ENCODE measurements at regions of chr4 and their contacts with region 1.

Region 1: GRCh38 chr4:42965326-42965725 is 72.8 kb downstream of the GRXCR1 start:
- DNase-seq: peak; percentile 48
- ATAC-seq: peak; percentile 60
- H3K4me3 ChIP-seq: no peak overlapping the region
- H3K27ac ChIP-seq: no peak overlapping the region
- H3K4me1 ChIP-seq: no peaks in the 10 kb centered on the region
- H3K27me3 ChIP-seq: no peaks in the 10 kb centered on the region
- CTCF ChIP-seq: peak; percentile 65

Region 2: DNA sequence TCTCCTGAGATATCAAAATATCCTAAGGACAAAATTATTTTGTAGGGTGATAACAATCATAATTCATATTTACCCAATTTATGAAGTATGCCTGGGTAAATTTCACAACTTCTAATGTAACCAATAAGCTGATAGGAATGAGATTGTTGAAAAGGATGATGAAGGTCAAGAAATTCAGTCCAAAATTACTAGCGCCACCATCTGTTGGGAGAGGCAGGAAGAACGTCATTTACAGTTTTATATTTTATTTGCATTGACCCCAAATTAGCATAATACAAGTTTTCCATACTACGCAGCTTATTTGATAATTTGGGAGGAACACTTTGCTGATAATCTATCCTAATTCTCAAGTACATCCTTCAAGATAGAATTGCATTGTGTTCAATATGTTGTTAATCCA is 387.1 kb before region 1 on chr4:
- CTCF ChIA-PET with region 1: no interaction called
- POLR2A ChIA-PET with region 1: no interaction called
- intact Hi-C with region 1: no loop called
- DNase-seq: no peak
- ATAC-seq: no peak
- H3K4me3 ChIP-seq: no peak overlapping the region
- H3K27ac ChIP-seq: no peak overlapping the region
- H3K4me1 ChIP-seq: peaks cover 12% of the 10 kb centered on the region
- H3K27me3 ChIP-seq: no peaks in the 10 kb centered on the region
- CTCF ChIP-seq: peak; percentile 47

Region 3: DNA sequence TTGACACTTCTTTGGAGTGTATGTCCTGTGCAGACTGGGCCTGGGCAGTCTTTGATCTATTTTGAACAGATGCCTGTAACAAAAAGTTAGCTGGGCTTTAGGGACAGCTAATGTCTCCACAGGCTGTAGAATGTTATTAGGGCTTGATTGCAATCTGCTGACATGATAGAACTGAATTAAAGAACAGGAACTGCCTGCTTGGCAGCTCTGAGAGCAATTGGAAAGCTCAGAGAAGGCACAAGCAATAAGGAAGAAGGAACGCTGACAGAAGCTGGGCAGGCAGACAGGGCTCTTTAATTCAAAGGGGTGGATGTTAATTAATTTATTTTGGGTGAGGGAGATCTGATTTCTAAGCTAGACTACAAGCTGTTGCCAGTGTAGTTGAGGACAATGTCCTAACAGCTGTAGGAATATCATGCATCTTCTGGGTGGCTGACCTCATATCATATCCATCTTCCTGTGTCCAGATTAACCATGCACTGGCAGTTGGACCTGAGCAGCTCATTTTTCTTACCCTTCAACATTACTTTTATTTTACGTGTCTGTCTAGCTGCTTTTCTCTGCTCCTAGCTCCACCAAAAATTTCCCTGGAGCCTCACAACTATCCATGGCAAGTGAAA is 93.5 kb before region 1 on chr4:
- CTCF ChIA-PET with region 1: no interaction called
- POLR2A ChIA-PET with region 1: no interaction called
- intact Hi-C with region 1: loop called (anchors 10 kb)
- DNase-seq: no peak
- ATAC-seq: no peak
- H3K4me3 ChIP-seq: no peak overlapping the region
- H3K27ac ChIP-seq: no peak overlapping the region
- H3K4me1 ChIP-seq: no peaks in the 10 kb centered on the region
- H3K27me3 ChIP-seq: peaks cover 7% of the 10 kb centered on the region; the same call in 1 of the 2 replicates
- CTCF ChIP-seq: no peak